Spleen (tissue), 13 donors: ENCODE measurements at regions of chr1 and their contacts with region 1.

Region 1: DNA sequence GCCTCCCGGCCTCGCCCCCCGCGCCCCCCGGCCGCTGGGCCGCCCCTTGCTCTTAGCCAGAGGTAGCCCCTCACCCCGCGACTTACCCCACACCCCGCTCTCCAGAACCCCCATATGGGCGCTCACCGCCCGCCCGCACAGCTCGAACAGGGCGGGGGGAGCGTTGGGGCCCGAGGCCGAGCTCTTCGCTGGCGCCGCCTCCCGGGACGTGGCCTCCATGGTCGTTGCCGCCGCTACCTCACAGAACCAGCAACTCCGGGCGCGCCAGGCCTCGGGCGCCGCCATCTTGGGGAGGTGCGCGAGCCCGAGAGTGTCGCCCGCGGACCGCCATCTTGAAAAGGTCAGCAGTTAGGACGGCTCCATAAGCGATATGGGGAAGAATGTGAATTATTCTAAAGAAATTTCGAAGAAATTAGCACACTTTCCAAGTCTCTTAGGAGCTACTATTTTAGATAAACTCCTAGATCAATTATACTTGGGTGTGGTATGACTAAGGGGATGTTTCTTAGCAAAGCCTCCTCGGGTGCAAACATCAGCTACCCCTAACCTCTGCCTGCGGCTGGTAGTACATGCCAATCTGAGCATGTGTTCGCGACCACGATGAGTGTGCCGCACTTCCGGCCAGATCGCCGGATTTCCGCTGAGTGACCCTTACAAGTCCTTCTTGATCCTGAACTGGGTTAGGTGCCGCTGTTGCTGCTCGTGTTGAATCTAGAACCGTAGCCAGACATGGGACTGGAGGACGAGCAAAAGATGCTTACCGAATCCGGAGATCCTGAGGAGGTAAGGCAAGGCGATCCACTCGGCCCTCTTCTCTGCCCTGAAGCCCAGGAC is at the starts of genes LRRC41 and UQCRH:
- DNase-seq: peak; percentile 98
- H3K4me3 ChIP-seq: peak within 1 kb of the TSS; percentile 48 to 89 (median 78)
- H3K27ac ChIP-seq: peak within 1 kb of the TSS; percentile 78 to 97 (median 96)
- H3K4me1 ChIP-seq: peaks cover 26 to 87% (median 64%) of the 10 kb centered on the region in 6 donors
- H3K27me3 ChIP-seq: no peaks in the 10 kb centered on the region
- CTCF ChIP-seq: peak in 4 of 11 experiments; percentile 16 to 42 (median 23)
- POLR2A ChIP-seq: peak; percentile 66 to 88 (median 73)
- total RNA-seq, gene LRRC41: 38.2 to 57.2 (median 47.6) TPM
- total RNA-seq, gene UQCRH: 106 to 386 (median 149) TPM

Region 2: GRCh38 chr1:46247436-46248121 is 55.7 kb before region 1 on chr1 and contains the start of gene RAD54L:
- intact Hi-C with region 1: loop called (anchors 5 kb)
- DNase-seq: peak; percentile 98
- H3K4me3 ChIP-seq: peak within 1 kb of the TSS; percentile 57 to 88 (median 69)
- H3K27ac ChIP-seq: peak within 1 kb of the TSS in 7 of 8 donors; percentile 11 to 79 (median 72)
- H3K4me1 ChIP-seq: peaks cover 0 to 24% (median 18%) of the 10 kb centered on the region in 6 donors
- H3K27me3 ChIP-seq: no peaks in the 10 kb centered on the region
- CTCF ChIP-seq: no peak
- POLR2A ChIP-seq: no peak
- total RNA-seq, gene RAD54L: 2.4 to 9.2 (median 2.9) TPM

Region 3: GRCh38 chr1:46340404-46341221 is 37.4 kb after region 1 on chr1 and contains the start of gene NSUN4:
- intact Hi-C with region 1: loop called (anchors 5 kb)
- DNase-seq: peak; percentile 95
- H3K4me3 ChIP-seq: peak within 1 kb of the TSS; percentile 58 to 91 (median 76)
- H3K27ac ChIP-seq: peak within 1 kb of the TSS; percentile 93 to 98 (median 96)
- H3K4me1 ChIP-seq: peaks cover 0 to 49% (median 18%) of the 10 kb centered on the region in 6 donors
- H3K27me3 ChIP-seq: no peaks in the 10 kb centered on the region
- CTCF ChIP-seq: peak; percentile 23 to 76 (median 69)
- POLR2A ChIP-seq: peak in 2 of 3 donors; percentile 7 to 76
- total RNA-seq, gene NSUN4: 24.8 to 35.2 (median 28.0) TPM